ENCODE measurements at regions of chr11 and their contacts with region 1.

Region 1: GRCh38 chr11:7904914-7905313 is 26.2 kb downstream of the OR10A6 start:
- DNase-seq: peak; percentile 69
- ATAC-seq: peak; percentile 57
- H3K4me3 ChIP-seq: no peak overlapping the region
- H3K27ac ChIP-seq: no peak overlapping the region
- H3K4me1 ChIP-seq: peaks cover 9% of the 10 kb centered on the region
- H3K27me3 ChIP-seq: no peaks in the 10 kb centered on the region
- CTCF ChIP-seq: peak; percentile 71
- POLR2A ChIP-seq: no peak
- RAD21 ChIP-seq: peak; percentile 74

Region 2: DNA sequence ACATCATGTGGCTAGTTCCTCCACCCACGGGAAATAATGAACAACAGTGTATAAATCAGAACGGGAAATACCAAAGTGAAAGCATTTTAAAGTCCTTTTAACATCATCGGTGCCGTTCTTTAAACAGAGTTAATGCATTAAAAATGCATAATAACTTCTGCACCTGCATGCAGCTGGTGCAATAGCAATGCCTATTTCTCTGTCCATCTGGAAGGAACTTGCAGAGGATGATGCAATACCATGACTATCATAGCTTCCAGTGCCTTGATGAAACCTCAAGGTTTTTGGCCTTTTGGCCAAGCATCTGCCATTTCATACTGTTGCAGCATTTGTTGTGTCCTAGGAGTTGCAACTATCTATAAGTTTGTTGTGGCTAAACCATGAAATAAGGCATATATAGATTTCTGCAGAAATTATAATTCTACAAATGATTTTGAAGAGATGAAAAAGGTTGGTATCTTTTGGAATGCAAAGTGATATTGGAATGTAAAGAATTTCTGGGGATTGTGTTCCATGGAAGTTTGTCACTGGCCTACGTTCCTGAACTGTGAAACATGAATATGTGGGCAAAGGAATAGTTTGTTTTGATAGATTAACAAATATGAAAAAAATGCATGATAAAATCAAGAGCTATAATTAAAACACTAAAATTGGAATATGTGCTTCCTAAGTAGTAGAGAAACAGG is 72.5 kb after region 1 on chr11:
- CTCF ChIA-PET with region 1: interaction called, 14 read pairs
- POLR2A ChIA-PET with region 1: interaction called, 7 read pairs
- dilution Hi-C with region 1: no loop called
- in situ Hi-C with region 1: no loop called
- intact Hi-C with region 1: no loop called
- DNase-seq: peak; percentile 97
- ATAC-seq: peak; percentile 87
- H3K4me3 ChIP-seq: no peak overlapping the region
- H3K27ac ChIP-seq: peak overlapping the region; percentile 98
- H3K4me1 ChIP-seq: peaks cover 9% of the 10 kb centered on the region; the same call in 1 of the 2 replicates
- H3K27me3 ChIP-seq: no peaks in the 10 kb centered on the region
- CTCF ChIP-seq: no peak
- POLR2A ChIP-seq: no peak
- RAD21 ChIP-seq: no peak

Region 3: GRCh38 chr11:7986768-7987559 is 82.0 kb after region 1 on chr11 and contains the start of gene EIF3F:
- CTCF ChIA-PET with region 1: interaction called, 79 read pairs
- POLR2A ChIA-PET with region 1: interaction called, 9 read pairs
- dilution Hi-C with region 1: no loop called
- in situ Hi-C with region 1: no loop called
- intact Hi-C with region 1: loop called (anchors 1 kb)
- DNase-seq: peak; percentile 100
- ATAC-seq: peak; percentile 98
- H3K4me3 ChIP-seq: peak within 1 kb of the TSS; percentile 97
- H3K27ac ChIP-seq: peak within 1 kb of the TSS; percentile 81
- H3K4me1 ChIP-seq: peaks cover 7% of the 10 kb centered on the region
- H3K27me3 ChIP-seq: no peaks in the 10 kb centered on the region
- CTCF ChIP-seq: peak; percentile 96
- POLR2A ChIP-seq: 0 out of 2 replicates have a peak, but pooled peaks have one; percentile 13
- RAD21 ChIP-seq: peak; percentile 93
- total RNA-seq, gene EIF3F: 279 and 308 TPM in 2 replicates

Measured in IMR-90 (cell line).